T-cell (primary cell): ENCODE measurements at regions of chr17 and their contacts with region 1.

Region 1: DNA sequence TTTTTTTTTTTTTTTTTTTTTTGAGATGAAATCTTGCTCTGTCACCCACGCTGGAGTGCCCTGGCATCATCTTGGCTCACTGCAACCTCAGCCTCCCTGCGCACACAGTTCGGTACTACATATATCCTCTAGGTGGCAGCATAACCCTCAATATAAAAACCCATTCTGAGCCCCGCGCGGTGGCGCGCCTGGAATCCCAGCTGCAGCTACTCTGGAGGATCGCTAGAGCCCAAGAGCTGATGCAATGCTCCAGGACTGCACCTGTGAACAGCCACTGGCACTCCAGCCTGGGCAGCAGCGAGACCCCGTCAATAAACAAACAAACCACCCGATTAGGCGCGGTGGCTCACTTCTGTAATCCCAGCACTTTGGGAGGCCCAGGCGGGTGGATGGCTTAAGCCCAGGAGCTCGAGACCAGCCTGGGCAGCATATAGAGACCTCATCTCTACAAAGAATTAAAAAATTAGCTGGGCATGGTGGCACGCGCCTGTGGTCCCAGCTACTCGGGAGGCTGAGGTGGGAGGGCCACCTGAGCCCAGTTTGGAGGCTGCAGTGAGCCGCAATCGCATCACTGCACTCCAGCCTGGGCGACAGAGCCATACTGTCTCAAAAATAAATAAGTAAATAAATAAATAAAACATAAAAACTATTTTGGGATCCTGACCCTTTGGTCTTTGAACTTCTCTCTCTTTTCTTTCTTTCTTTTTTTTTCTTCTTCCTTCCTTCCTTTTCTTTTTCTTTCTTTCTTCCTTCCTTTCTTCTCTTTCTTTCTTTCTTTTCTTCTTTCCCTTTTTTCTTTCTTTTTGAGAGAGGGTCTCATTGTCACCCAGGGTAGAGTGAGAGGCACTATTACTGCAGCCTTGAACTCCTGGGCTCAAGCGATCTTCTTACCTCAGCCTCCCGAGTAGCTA is 15.4 kb upstream of the AKAP10 start:
- DNase-seq: peak; percentile 55 to 87 (median 69)
- ATAC-seq: peak; percentile 97 to 100 (median 98)
- H3K4me3 ChIP-seq: no peak overlapping the region
- H3K4me3 Mint-ChIP-seq: peak overlapping the region in 1 of 3 donors; percentile 19
- H3K27ac ChIP-seq: no peak overlapping the region
- H3K27ac Mint-ChIP-seq: no peak overlapping the region
- H3K4me1 ChIP-seq: peaks cover 0 to 4% of the 10 kb centered on the region in 2 experiments
- H3K4me1 Mint-ChIP-seq: peaks cover 4 to 7% (median 6%) of the 10 kb centered on the region in 3 donors
- H3K27me3 ChIP-seq: peaks cover 0 to 20% of the 10 kb centered on the region in 2 experiments
- H3K27me3 Mint-ChIP-seq: peaks cover 4 to 13% of the 10 kb centered on the region in 2 donors

Region 2: GRCh38 chr17:19915245-19915978 is 77.6 kb before region 1 on chr17:
- CTCF ChIA-PET with region 1: no interaction called
- POLR2A ChIA-PET with region 1: no interaction called
- DNase-seq: no peak
- ATAC-seq: no peak
- H3K4me3 ChIP-seq: no peak overlapping the region
- H3K4me3 Mint-ChIP-seq: no peak overlapping the region
- H3K27ac ChIP-seq: no peak overlapping the region
- H3K27ac Mint-ChIP-seq: no peak overlapping the region
- H3K4me1 ChIP-seq: no peaks in the 10 kb centered on the region
- H3K4me1 Mint-ChIP-seq: peaks cover 0 to 22% (median 0%) of the 10 kb centered on the region in 3 donors
- H3K27me3 ChIP-seq: no peaks in the 10 kb centered on the region
- H3K27me3 Mint-ChIP-seq: no peaks in the 10 kb centered on the region

Region 3: DNA sequence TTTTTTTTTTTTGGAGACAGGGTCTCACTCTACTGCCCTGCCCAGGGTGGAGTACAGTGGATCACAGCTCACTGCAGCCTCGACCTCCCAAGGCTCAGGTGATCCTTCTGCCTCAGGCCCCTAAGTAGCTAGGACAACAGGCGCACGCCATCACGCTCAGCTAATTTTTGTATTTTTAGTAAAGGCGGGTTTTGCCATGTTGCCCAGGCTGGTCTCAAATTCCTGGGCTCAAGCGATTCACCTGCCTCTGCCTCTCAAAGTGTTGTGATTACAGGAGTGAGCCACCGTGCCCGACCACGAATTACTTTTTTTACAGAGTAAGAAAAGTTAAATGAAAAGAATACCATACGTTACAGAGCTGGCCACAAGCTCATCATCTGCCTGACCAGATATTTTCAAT is 54.3 kb before region 1 on chr17:
- CTCF ChIA-PET with region 1: interaction called in 1 of 2 experiments, 10 read pairs
- POLR2A ChIA-PET with region 1: no interaction called
- DNase-seq: no peak
- ATAC-seq: no peak
- H3K4me3 ChIP-seq: no peak overlapping the region
- H3K4me3 Mint-ChIP-seq: no peak overlapping the region
- H3K27ac ChIP-seq: no peak overlapping the region
- H3K27ac Mint-ChIP-seq: no peak overlapping the region
- H3K4me1 ChIP-seq: peaks cover 0 to 8% of the 10 kb centered on the region in 2 experiments
- H3K4me1 Mint-ChIP-seq: peaks cover 21 to 31% (median 21%) of the 10 kb centered on the region in 3 donors
- H3K27me3 ChIP-seq: no peaks in the 10 kb centered on the region
- H3K27me3 Mint-ChIP-seq: no peaks in the 10 kb centered on the region

Region 4: GRCh38 chr17:19979917-19980770 is 12.9 kb before region 1 on chr17:
- CTCF ChIA-PET with region 1: interaction called, 7 to 11 read pairs
- POLR2A ChIA-PET with region 1: interaction called in 1 of 2 experiments, 8 read pairs
- DNase-seq: no peak
- ATAC-seq: no peak
- H3K4me3 ChIP-seq: no peak overlapping the region
- H3K4me3 Mint-ChIP-seq: no peak overlapping the region
- H3K27ac ChIP-seq: no peak overlapping the region
- H3K27ac Mint-ChIP-seq: no peak overlapping the region
- H3K4me1 ChIP-seq: peaks cover 3 to 24% of the 10 kb centered on the region in 2 experiments
- H3K4me1 Mint-ChIP-seq: peaks cover 23 to 30% (median 30%) of the 10 kb centered on the region in 3 donors
- H3K27me3 ChIP-seq: no peaks in the 10 kb centered on the region
- H3K27me3 Mint-ChIP-seq: no peaks in the 10 kb centered on the region